ENCODE measurements at regions of chr12 and their contacts with region 1.

Region 1: GRCh38 chr12:113334786-113335540 is at the start of gene SLC8B1:
- DNase-seq: peak; percentile 74 to 85
- ATAC-seq: peak; percentile 90 to 95
- H3K4me3 ChIP-seq: peak within 1 kb of the TSS; percentile 77 to 85 (median 82)
- H3K27ac ChIP-seq: peak within 1 kb of the TSS; percentile 80 to 85 (median 82)
- H3K4me1 ChIP-seq: peaks cover 11 to 16% of the 10 kb centered on the region in 2 donors
- H3K27me3 ChIP-seq: no peaks in the 10 kb centered on the region
- CTCF ChIP-seq: no peak
- POLR2A ChIP-seq: peak; percentile 89 to 92
- total RNA-seq, gene SLC8B1: 8.2 to 21.2 (median 14.5) TPM

Region 2: DNA sequence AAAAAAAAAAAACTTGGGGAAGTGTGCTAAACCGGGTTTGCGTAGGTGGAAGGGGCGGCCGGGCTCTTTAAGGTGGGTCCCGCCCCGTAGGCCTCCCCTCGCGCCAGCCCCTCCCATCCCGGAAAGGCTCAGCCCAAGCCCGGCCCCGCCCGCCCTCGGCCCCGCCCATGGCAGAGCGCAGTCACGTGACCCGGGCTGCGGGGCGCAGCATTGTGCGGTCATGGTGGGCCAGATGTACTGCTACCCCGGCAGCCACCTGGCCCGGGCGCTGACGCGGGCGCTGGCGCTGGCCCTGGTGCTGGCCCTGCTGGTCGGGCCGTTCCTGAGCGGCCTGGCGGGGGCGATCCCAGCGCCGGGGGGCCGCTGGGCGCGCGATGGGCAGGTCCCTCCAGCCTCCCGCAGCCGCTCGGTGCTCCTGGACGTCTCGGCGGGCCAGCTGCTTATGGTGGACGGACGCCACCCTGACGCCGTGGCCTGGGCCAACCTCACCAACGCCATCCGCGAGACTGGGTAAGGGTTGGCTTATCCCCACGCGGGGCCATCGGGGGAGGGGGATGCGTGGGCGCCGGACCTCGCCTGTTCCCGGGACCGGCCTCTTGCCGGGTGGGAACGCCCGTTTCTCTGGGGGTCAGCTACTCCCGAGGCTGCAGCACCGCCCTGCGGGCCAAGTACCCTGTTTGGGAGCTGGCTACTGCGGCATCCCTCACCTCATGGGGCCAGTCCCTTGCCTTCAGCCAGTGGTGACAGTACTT is 23.6 kb after region 1 on chr12 and contains the start of gene PLBD2:
- in situ Hi-C with region 1: no loop called
- intact Hi-C with region 1: loop called (anchors 1 kb)
- DNase-seq: peak; percentile 92 to 93
- ATAC-seq: peak; percentile 94 to 95
- H3K4me3 ChIP-seq: peak within 1 kb of the TSS; percentile 66 to 91 (median 80)
- H3K27ac ChIP-seq: peak within 1 kb of the TSS; percentile 85 to 92 (median 90)
- H3K4me1 ChIP-seq: peaks cover 14% of the 10 kb centered on the region in 2 donors
- H3K27me3 ChIP-seq: no peaks in the 10 kb centered on the region
- CTCF ChIP-seq: peak in 1 of 5 experiments; percentile 20
- POLR2A ChIP-seq: peak; percentile 76 to 77
- total RNA-seq, gene PLBD2: 12.0 to 28.9 (median 26.8) TPM

Region 3: DNA sequence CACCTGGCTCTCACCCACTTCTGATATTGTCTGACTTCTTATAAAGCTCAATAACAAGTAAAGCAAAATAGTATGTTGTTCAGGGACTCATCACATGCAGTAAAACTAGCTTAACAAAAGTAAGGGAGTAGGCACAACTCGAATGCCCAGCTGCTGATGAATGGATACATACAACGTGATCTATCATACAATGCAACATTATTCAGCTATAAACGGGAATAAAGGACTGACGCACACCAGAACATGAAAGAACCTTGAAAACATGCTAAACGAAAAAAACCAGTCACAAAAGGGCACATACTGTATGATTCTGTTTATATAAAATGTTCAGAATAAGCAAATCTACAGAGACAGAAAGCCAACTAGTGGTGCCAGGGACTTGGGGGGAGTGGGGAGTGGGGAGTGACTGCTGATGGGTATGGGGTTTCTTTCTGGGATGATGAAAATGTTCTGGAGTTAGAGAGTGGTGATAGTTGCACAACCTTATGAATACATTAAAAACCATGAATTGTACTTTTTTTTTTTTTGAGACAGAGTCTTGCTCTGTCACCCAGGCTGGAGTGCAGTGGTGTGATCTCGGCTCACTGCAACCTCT is 34.5 kb after region 1 on chr12:
- in situ Hi-C with region 1: no loop called
- intact Hi-C with region 1: no loop called
- DNase-seq: no peak
- ATAC-seq: no peak
- H3K4me3 ChIP-seq: no peak overlapping the region
- H3K27ac ChIP-seq: no peak overlapping the region
- H3K4me1 ChIP-seq: peaks cover 13 to 23% of the 10 kb centered on the region in 2 donors
- H3K27me3 ChIP-seq: no peaks in the 10 kb centered on the region
- CTCF ChIP-seq: no peak
- POLR2A ChIP-seq: no peak

Measured in gastrocnemius medialis (tissue), 4 donors.